ENCODE measurements at regions of chr12 and their contacts with region 1.

Region 1: GRCh38 chr12:88934163-88934747 is 354.0 kb upstream of the KITLG start:
- DNase-seq: no peak
- ATAC-seq: no peak
- H3K4me3 ChIP-seq: no peak overlapping the region
- H3K4me3 Mint-ChIP-seq: no peak overlapping the region
- H3K27ac ChIP-seq: no peak overlapping the region
- H3K27ac Mint-ChIP-seq: no peak overlapping the region
- H3K4me1 ChIP-seq: peaks cover 0 to 4% of the 10 kb centered on the region in 2 experiments
- H3K4me1 Mint-ChIP-seq: no peaks in the 10 kb centered on the region
- H3K27me3 ChIP-seq: no peaks in the 10 kb centered on the region
- H3K27me3 Mint-ChIP-seq: peaks cover 7 to 8% of the 10 kb centered on the region in 2 donors

Region 2: GRCh38 chr12:88918166-88918565 is 16.1 kb before region 1 on chr12:
- CTCF ChIA-PET with region 1: no interaction called
- POLR2A ChIA-PET with region 1: interaction called in 1 of 2 experiments, 10 read pairs
- DNase-seq: no peak
- ATAC-seq: no peak
- H3K4me3 ChIP-seq: no peak overlapping the region
- H3K4me3 Mint-ChIP-seq: no peak overlapping the region
- H3K27ac ChIP-seq: no peak overlapping the region
- H3K27ac Mint-ChIP-seq: no peak overlapping the region
- H3K4me1 ChIP-seq: no peaks in the 10 kb centered on the region
- H3K4me1 Mint-ChIP-seq: no peaks in the 10 kb centered on the region
- H3K27me3 ChIP-seq: peaks cover 0 to 9% of the 10 kb centered on the region in 2 experiments
- H3K27me3 Mint-ChIP-seq: no peaks in the 10 kb centered on the region

Region 3: GRCh38 chr12:89244536-89244935 is 310.3 kb after region 1 on chr12:
- CTCF ChIA-PET with region 1: no interaction called
- POLR2A ChIA-PET with region 1: no interaction called
- DNase-seq: peak in 15 of 35 experiments; percentile 7 to 49 (median 19)
- ATAC-seq: peak; percentile 64 to 72 (median 70)
- H3K4me3 ChIP-seq: peak overlapping the region in 1 of 2 donors; percentile 47
- H3K4me3 Mint-ChIP-seq: peak overlapping the region; percentile 26 to 48 (median 44)
- H3K27ac ChIP-seq: no peak overlapping the region
- H3K27ac Mint-ChIP-seq: peak overlapping the region; percentile 16 to 35
- H3K4me1 ChIP-seq: peaks cover 26 to 28% of the 10 kb centered on the region in 2 experiments
- H3K4me1 Mint-ChIP-seq: peaks cover 33 to 48% (median 39%) of the 10 kb centered on the region in 3 donors
- H3K27me3 ChIP-seq: no peaks in the 10 kb centered on the region
- H3K27me3 Mint-ChIP-seq: no peaks in the 10 kb centered on the region

Measured in T-cell (primary cell).